ENCODE measurements at regions of chr19 and their contacts with region 1.

Region 1: GRCh38 chr19:40139533-40140287 is 49.0 kb upstream of the ZNF780A start:
- DNase-seq: no peak
- ATAC-seq: peak in 2 of 4 donors; percentile 22 to 76
- H3K4me3 ChIP-seq: no peak overlapping the region
- H3K27ac ChIP-seq: no peak overlapping the region
- H3K4me1 ChIP-seq: peaks cover 6% of the 10 kb centered on the region
- H3K27me3 ChIP-seq: peaks cover 0 to 2% (median 2%) of the 10 kb centered on the region in 3 donors
- CTCF ChIP-seq: peak; percentile 66

Region 2: GRCh38 chr19:40221858-40222837 is 82.4 kb after region 1 on chr19:
- intact Hi-C with region 1: loop called (anchors 2 to 5 kb)
- DNase-seq: peak; percentile 79 to 84
- ATAC-seq: peak; percentile 80 to 87 (median 84)
- H3K4me3 ChIP-seq: no peak overlapping the region
- H3K27ac ChIP-seq: no peak overlapping the region
- H3K4me1 ChIP-seq: peaks cover 16% of the 10 kb centered on the region
- H3K27me3 ChIP-seq: peaks cover 0 to 79% (median 27%) of the 10 kb centered on the region in 3 donors
- CTCF ChIP-seq: peak; percentile 87

Region 3: GRCh38 chr19:40312533-40312932 is 172.8 kb after region 1 on chr19:
- intact Hi-C with region 1: no loop called
- DNase-seq: no peak
- ATAC-seq: no peak
- H3K4me3 ChIP-seq: no peak overlapping the region
- H3K27ac ChIP-seq: no peak overlapping the region
- H3K4me1 ChIP-seq: no peaks in the 10 kb centered on the region
- H3K27me3 ChIP-seq: no peaks in the 10 kb centered on the region
- CTCF ChIP-seq: no peak